Ovary (tissue), 10 donors: ENCODE measurements at regions of chr6 and their contacts with region 1.

Region 1: DNA sequence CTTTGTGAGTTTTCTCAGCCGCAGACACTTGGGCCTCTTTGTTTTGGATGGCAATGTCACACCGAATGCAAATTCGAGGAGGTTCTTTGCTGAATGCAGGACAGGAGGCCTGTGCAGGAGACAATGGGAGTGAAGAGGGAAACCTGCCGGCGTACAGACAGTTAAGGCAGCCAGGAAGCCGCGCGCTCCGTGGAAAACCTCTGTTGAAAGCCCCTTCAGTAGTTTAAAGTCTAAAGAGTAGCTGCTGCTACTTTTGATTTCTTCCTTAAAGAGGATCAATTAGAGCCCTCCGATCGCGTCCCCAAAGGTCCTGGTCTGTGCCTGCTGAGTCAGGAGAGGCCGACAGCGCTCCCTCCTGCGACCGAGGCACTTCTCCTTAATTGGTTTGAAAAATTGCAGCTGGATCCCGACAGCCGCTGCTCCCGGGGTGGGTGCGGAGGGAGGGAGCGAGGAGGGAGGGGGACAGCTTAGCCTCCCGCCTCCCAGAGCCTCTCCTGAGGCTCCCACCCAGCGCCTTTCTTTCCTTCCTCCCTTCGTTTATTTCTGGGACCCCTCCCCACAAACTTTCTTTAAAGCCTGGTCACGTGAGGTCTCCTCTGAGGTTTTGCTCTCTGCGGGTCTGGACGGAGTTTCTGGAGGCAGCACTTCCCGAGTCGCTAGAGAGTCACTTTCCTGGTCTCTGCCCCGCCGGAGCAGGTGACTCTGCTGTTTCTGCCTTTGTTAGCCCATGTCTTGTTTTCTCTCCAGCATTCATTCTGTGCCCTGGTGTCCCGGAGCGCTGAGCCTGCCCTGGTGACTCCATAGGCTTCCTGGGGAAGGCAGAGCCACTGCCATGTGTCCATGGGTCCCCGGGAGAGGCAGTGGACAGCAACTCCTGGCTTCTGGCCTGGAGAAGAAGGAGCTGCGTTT is 22.3 kb upstream of the RPP40 start:
- DNase-seq: peak; percentile 58 to 71 (median 66)
- H3K4me3 ChIP-seq: peak overlapping the region; percentile 41
- H3K27ac ChIP-seq: peak overlapping the region; percentile 4 to 31
- H3K4me1 ChIP-seq: peaks cover 2% of the 10 kb centered on the region
- H3K27me3 ChIP-seq: no peaks in the 10 kb centered on the region
- CTCF ChIP-seq: peak in 1 of 3 donors; percentile 12
- EP300 ChIP-seq: no peak
- POLR2A ChIP-seq: no peak

Region 2: DNA sequence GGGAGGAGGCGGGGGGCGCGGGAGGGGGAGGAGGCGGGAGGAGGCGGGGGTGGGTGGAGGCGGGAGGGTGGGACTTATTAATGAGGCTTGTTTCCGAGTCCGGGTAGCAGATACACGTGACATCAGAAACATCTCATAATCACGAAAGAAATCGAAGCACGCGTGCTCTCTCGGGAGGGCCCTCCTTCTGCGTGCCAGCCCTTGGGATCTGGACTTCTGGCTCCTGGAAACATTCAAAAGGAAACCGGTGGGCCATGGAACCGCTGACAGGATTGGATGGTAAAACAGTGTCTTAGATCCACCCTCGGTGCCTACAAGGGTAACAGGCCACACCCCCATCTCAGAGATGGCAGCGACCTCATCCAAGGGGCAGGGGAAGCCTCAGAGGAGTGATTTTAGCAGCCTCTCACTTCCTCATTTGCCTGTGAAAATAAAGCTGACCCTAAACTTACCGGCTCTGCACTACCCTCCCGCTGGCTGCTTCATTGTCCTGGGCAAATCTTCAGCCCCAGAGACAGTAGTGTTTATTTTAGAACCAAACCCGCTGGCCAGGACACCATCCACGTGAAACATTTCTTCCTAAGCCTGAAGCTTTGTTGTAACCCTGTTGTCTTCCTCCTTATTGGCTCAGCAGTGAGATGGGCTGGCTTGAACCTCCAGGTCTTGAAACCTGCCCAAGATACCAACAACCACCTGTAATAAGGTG is 1670.0 kb before region 1 on chr6:
- intact Hi-C with region 1: loop called in 1 of 4 experiments (anchors 5 kb)
- DNase-seq: peak; percentile 67 to 77 (median 74)
- H3K4me3 ChIP-seq: peak overlapping the region; percentile 27
- H3K27ac ChIP-seq: peak overlapping the region; percentile 78 to 84
- H3K4me1 ChIP-seq: peaks cover 8% of the 10 kb centered on the region
- H3K27me3 ChIP-seq: no peaks in the 10 kb centered on the region
- CTCF ChIP-seq: no peak
- EP300 ChIP-seq: no peak
- POLR2A ChIP-seq: no peak

Region 3: DNA sequence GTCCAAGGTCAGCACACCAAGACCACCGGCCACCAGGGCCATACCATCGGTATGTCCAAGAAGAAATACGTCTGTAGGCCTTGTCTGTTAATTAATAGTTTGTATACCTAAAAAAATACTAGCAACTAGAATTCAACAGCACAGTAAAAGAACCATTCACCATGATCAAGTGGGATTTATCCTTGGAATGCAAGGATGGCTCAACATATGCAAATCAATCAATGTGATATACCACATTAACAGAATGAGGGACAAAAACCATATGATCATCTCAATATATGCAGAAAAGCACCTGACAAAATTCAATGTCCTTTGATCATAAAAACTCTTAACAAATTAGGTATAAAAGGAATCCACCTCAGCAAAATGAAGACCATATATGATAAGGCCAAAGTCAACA is 46.7 kb before region 1 on chr6:
- intact Hi-C with region 1: loop called in 1 of 4 experiments (anchors 2 kb)
- DNase-seq: no peak
- H3K4me3 ChIP-seq: no peak overlapping the region
- H3K27ac ChIP-seq: no peak overlapping the region
- H3K4me1 ChIP-seq: no peaks in the 10 kb centered on the region
- H3K27me3 ChIP-seq: no peaks in the 10 kb centered on the region
- CTCF ChIP-seq: no peak
- EP300 ChIP-seq: no peak
- POLR2A ChIP-seq: no peak